OCI-LY7 (cell line): ENCODE measurements at regions of chr17 and their contacts with region 1.

Region 1: DNA sequence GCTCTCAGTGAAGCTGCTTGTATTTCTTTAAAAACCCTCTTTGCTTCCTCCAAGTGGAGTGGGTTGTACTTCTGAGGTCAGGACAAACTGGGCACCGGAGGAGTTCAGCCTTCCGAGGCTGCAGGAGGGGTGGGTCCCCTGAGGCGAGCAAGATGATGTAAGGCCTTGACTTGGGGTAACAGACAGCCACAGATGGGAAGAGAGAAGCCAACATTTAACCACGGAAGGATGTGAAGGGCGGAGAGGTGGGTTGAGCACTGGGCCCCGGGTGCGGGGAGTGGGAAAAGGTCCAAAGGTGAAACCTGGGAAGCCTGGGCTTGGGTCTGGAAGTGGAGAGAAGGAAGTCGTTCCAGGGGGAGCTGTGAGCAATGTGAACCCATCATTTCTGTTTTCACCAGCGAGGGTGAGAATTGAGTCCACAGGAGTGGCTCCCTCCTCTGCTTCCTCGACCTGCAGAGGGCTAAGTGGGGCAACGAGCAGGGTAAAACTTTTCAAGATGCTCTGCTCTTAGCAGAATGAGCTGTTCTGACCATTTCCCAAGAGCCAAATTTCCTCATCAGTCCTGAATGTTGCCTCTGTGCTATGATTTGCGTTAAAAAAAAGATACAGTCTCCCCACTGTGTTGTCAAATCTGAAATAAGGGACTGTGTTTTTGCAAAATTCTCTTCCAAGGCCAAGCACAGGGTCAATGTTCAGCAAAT is 137.7 kb upstream of the CRHR1 start:
- DNase-seq: no peak
- H3K4me3 ChIP-seq: no peak overlapping the region
- H3K27ac ChIP-seq: no peak overlapping the region
- H3K4me1 ChIP-seq: no peaks in the 10 kb centered on the region
- CTCF ChIP-seq: no peak

Region 2: GRCh38 chr17:45855691-45856336 is 209.4 kb after region 1 on chr17:
- CTCF ChIA-PET with region 1: no interaction called
- POLR2A ChIA-PET with region 1: no interaction called
- intact Hi-C with region 1: loop called (anchors 2 kb)
- DNase-seq: no peak
- H3K4me3 ChIP-seq: no peak overlapping the region
- H3K27ac ChIP-seq: no peak overlapping the region
- H3K4me1 ChIP-seq: no peaks in the 10 kb centered on the region
- CTCF ChIP-seq: no peak